ENCODE measurements at regions of chr15 and their contacts with region 1.

Region 1: GRCh38 chr15:48414015-48414414 is 82.8 kb downstream of the DUT start:
- DNase-seq: peak in 1 of 2 donors; percentile 88
- H3K4me3 ChIP-seq: no peak overlapping the region
- H3K27ac ChIP-seq: peak overlapping the region; percentile 70 to 81
- H3K4me1 ChIP-seq: peaks cover 0 to 49% of the 10 kb centered on the region in 2 donors
- H3K27me3 ChIP-seq: no peaks in the 10 kb centered on the region
- CTCF ChIP-seq: no peak

Region 2: GRCh38 chr15:48330855-48331795 is 82.9 kb before region 1 on chr15 and contains the start of gene DUT:
- intact Hi-C with region 1: loop called (anchors 1 kb)
- DNase-seq: peak; percentile 27 to 91
- H3K4me3 ChIP-seq: peak within 1 kb of the TSS; percentile 70 to 89
- H3K27ac ChIP-seq: peak within 1 kb of the TSS; percentile 92 to 98
- H3K4me1 ChIP-seq: peaks cover 4 to 12% of the 10 kb centered on the region in 2 donors
- H3K27me3 ChIP-seq: no peaks in the 10 kb centered on the region
- CTCF ChIP-seq: no peak
- total RNA-seq, gene DUT: 150 TPM

Region 3: GRCh38 chr15:48358229-48358641 is 55.8 kb before region 1 on chr15:
- intact Hi-C with region 1: loop called (anchors 1 kb)
- DNase-seq: no peak
- H3K4me3 ChIP-seq: peak overlapping the region; percentile 17 to 42
- H3K27ac ChIP-seq: peak overlapping the region; percentile 47 to 56
- H3K4me1 ChIP-seq: peaks cover 0 to 21% of the 10 kb centered on the region in 2 donors
- H3K27me3 ChIP-seq: no peaks in the 10 kb centered on the region
- CTCF ChIP-seq: peak; percentile 35 to 69 (median 44)

Region 4: DNA sequence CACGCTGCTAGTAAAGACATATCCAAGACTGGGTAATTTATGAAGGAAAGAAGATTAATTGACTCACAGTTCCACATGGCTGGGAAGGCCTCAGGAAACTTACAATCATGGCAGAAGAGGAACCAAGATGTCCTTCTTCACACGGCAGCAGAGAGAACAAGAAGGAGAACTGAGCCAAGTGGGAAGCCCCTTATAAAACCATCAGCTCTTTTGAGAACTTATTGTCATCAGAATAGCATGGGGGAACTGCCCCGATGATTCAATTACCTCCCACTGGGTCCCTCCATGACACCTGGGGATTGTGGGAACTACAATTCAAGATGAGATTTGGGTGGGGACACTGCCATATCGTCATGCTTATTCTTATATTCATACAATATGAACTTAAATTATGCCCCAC is 33.8 kb before region 1 on chr15:
- intact Hi-C with region 1: no loop called
- DNase-seq: no peak
- H3K4me3 ChIP-seq: no peak overlapping the region
- H3K27ac ChIP-seq: no peak overlapping the region
- H3K4me1 ChIP-seq: peaks cover 0 to 5% of the 10 kb centered on the region in 2 donors
- H3K27me3 ChIP-seq: no peaks in the 10 kb centered on the region
- CTCF ChIP-seq: no peak

Region 5: GRCh38 chr15:48392356-48392755 is 21.7 kb before region 1 on chr15:
- intact Hi-C with region 1: loop called (anchors 1 kb)
- DNase-seq: peak in 1 of 2 donors; percentile 79
- H3K4me3 ChIP-seq: no peak overlapping the region
- H3K27ac ChIP-seq: peak overlapping the region; percentile 83 to 86
- H3K4me1 ChIP-seq: peaks cover 11 to 65% of the 10 kb centered on the region in 2 donors
- H3K27me3 ChIP-seq: no peaks in the 10 kb centered on the region
- CTCF ChIP-seq: no peak